Heart right ventricle (tissue), 16 donors: ENCODE measurements at regions of chr13 and their contacts with region 1.

Region 1: DNA sequence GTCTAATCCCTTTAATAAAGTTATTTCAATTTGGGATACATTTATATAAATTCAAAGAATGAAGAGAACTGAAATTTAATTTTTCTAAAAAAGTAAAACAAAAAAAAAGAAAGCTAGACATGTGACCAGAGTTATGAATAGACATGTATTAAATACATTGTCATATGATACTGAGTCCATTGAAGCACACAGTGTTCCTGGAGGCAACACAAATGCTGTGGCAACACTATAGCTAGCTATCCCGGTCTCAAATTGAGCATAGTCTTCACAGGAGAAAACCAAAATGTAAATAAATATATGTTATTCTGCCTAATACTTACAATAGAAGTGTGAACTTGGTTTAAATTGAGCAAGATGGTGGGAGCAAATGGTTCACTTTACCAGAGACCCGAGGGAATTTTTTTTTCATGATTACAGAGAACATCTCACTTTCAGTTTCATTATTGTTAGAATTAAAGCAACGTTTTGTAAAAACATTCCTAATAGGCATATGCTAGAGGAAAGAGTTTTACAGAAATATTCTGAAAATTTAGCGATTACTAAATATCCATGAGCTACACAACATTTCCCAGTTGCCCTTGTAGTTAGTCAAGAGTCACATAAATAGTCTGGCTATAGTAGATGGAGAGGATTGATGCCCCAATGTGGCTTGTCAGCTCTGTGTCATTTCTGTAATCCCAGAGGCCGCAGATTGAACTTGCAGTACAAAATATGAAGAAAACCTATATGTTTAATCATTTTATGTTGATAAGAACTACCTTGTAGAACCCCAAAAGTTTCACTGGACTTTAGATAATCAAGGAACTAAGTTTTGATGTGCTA is 775.7 kb upstream of the SPRY2 start:
- DNase-seq: no peak
- ATAC-seq: no peak
- H3K4me3 ChIP-seq: no peak overlapping the region
- H3K27ac ChIP-seq: no peak overlapping the region
- H3K4me1 ChIP-seq: no peaks in the 10 kb centered on the region
- H3K27me3 ChIP-seq: no peaks in the 10 kb centered on the region
- CTCF ChIP-seq: no peak

Region 2: GRCh38 chr13:79859756-79860155 is 1256.9 kb before region 1 on chr13:
- intact Hi-C with region 1: loop called in 1 of 10 experiments (anchors 5 kb)
- DNase-seq: no peak
- ATAC-seq: no peak
- H3K4me3 ChIP-seq: no peak overlapping the region
- H3K27ac ChIP-seq: no peak overlapping the region
- H3K4me1 ChIP-seq: no peaks in the 10 kb centered on the region
- H3K27me3 ChIP-seq: no peaks in the 10 kb centered on the region
- CTCF ChIP-seq: no peak